Posterior vena cava (tissue), 2 donors: ENCODE measurements at regions of chr4 and their contacts with region 1.

Region 1: DNA sequence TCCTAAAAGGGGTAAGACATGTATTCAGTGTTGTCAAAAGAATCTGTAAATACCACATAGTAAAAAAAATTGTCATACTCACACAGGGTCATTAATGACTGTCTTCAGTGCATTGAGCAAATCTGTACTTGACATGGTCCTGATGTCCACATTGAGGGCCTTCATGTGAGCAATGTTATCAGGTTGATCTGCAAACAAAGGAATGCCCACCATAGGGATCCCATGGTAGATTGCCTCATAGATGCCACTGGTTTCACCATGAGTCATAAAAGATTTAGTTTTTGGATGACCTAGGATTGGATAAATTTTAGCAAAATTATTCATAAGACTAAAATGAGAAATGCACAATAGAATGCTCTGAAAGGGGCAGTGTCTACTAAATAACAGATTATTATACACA is 38.1 kb upstream of the UGT2B15 start:
- DNase-seq: no peak

Region 2: GRCh38 chr4:68724419-68724818 is 15.9 kb after region 1 on chr4:
- intact Hi-C with region 1: loop called in 1 of 2 experiments (anchors 1 kb)
- DNase-seq: no peak

Region 3: GRCh38 chr4:69095301-69095731 is 386.8 kb after region 1 on chr4:
- intact Hi-C with region 1: no loop called
- DNase-seq: no peak